Heart right ventricle (tissue), 16 donors: ENCODE measurements at regions of chr6 and their contacts with region 1.

Region 1: DNA sequence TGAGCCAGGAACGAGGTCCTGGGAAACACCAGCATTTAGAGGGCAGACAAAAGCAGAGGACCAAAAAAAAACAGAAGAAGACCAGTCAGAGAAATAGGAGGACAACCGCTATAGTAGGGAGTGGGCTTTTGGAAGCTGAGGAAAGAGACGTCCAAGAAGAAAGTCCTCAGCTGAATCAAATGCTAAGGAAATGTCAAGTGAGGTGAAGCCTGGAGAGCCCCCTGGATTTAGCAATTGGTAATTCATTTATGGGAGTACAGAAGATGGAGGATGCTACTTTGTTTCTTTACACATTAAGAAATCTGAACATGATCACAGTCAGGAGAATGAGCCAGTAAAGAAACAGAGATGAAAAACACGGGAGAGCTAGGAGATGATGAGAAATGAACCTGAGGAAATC is 41.1 kb downstream of the LRP11 start:
- DNase-seq: no peak
- ATAC-seq: no peak
- H3K4me3 ChIP-seq: no peak overlapping the region
- H3K27ac ChIP-seq: no peak overlapping the region
- H3K4me1 ChIP-seq: peaks cover 0 to 15% (median 3%) of the 10 kb centered on the region in 9 donors
- H3K27me3 ChIP-seq: no peaks in the 10 kb centered on the region
- CTCF ChIP-seq: no peak

Region 2: DNA sequence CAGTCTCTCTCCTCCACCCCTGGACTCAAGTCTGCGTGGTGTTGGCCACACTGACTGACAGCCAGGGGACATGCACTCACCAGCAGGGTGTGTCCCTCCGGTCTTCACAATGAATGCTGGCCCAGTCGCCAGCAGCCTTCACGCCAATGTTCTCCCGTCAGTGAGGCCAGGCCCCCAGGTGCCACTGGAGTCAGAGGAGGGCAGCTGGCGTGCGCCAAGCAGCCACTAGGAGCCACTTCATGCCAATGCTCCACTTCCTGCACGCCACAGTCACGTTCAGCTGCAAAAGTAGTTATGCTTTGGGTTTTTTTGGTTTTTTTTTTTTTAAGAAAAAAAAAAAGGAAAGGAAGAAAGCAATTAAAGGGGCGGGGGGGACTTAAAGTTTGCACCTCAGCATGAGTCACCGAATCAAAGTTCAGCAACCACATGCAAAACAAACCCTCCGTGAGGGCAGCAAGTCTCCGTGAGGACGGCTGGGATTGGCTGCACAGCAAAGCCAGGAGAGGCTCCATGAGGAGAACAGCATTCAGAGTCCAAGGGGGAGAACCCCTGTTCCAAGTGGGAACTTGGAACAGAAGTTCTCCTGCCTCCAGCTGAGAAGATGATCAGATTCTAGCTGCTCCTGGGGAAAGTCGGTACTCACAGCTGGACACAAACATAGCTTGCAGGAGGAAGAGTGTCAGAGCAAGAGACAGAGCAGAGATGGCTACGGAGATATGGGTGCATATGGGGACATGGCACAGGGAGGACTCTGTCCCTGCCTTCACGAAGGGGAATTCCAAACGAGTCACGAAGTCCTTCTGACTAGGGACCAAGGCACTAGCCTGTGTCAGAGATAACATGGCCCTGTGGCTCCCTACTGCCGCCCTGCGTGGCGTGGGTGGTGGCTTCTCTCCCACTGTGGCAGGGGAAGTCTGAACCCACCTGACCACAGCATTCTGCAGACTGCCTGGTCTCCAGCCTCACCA is 338.0 kb before region 1 on chr6 and contains the start of gene ZC3H12D:
- intact Hi-C with region 1: no loop called
- DNase-seq: peak in 1 of 2 donors; percentile 65
- ATAC-seq: peak; percentile 43 to 73 (median 63)
- H3K4me3 ChIP-seq: peak within 1 kb of the TSS in 5 of 10 donors; percentile 1 to 58 (median 5)
- H3K27ac ChIP-seq: peak within 1 kb of the TSS in 8 of 10 donors; percentile 23 to 94 (median 69)
- H3K4me1 ChIP-seq: peaks cover 0 to 54% (median 28%) of the 10 kb centered on the region in 9 donors
- H3K27me3 ChIP-seq: peaks cover 0 to 10% (median 0%) of the 10 kb centered on the region in 7 donors
- CTCF ChIP-seq: peak in 4 of 9 donors; percentile 13 to 42 (median 22)
- total RNA-seq, gene ZC3H12D: 0.14 to 1.2 (median 0.31) TPM

Region 3: GRCh38 chr6:149852180-149852579 is 29.2 kb after region 1 on chr6:
- intact Hi-C with region 1: no loop called
- DNase-seq: no peak
- ATAC-seq: peak in 7 of 8 donors; percentile 46 to 93 (median 74)
- H3K4me3 ChIP-seq: no peak overlapping the region
- H3K27ac ChIP-seq: peak overlapping the region in 1 of 10 donors; percentile 29
- H3K4me1 ChIP-seq: peaks cover 0 to 17% (median 9%) of the 10 kb centered on the region in 9 donors
- H3K27me3 ChIP-seq: no peaks in the 10 kb centered on the region
- CTCF ChIP-seq: no peak

Region 4: GRCh38 chr6:150025201-150025917 is 202.3 kb after region 1 on chr6 and contains the start of gene RAET1L:
- intact Hi-C with region 1: loop called in 1 of 10 experiments (anchors 10 kb)
- DNase-seq: peak; percentile 25 to 41
- ATAC-seq: peak in 6 of 8 donors; percentile 40 to 77 (median 54)
- H3K4me3 ChIP-seq: peak within 1 kb of the TSS in 9 of 10 donors; percentile 10 to 39 (median 30)
- H3K27ac ChIP-seq: no peak within 1 kb of the TSS
- H3K4me1 ChIP-seq: peaks cover 0 to 14% (median 11%) of the 10 kb centered on the region in 9 donors
- H3K27me3 ChIP-seq: peaks cover 0 to 66% (median 51%) of the 10 kb centered on the region in 7 donors
- CTCF ChIP-seq: no peak
- total RNA-seq, gene RAET1L: not detected